Panc1 (cell line): ENCODE measurements at regions of chr17 and their contacts with region 1.

Region 1: GRCh38 chr17:33750943-33751701 is 458.0 kb upstream of the ASIC2 start:
- DNase-seq: peak; percentile 39
- ATAC-seq: peak; percentile 91
- H3K4me3 ChIP-seq: 0 out of 4 replicates have a peak overlapping the region, but pooled peaks of 1 of the 2 experiments have one; percentile 6
- H3K27ac ChIP-seq: no peak overlapping the region
- H3K4me1 ChIP-seq: peaks cover 4% of the 10 kb centered on the region
- H3K27me3 ChIP-seq: peaks cover 8% of the 10 kb centered on the region
- CTCF ChIP-seq: peak; percentile 93

Region 2: GRCh38 chr17:33292184-33292980 is 458.7 kb before region 1 on chr17:
- CTCF ChIA-PET with region 1: interaction called, 10 read pairs
- POLR2A ChIA-PET with region 1: no interaction called
- in situ Hi-C with region 1: no loop called
- intact Hi-C with region 1: no loop called
- DNase-seq: no peak
- ATAC-seq: peak; percentile 78
- H3K4me3 ChIP-seq: peak overlapping the region; percentile 58 to 74
- H3K27ac ChIP-seq: peak overlapping the region; percentile 41; the same call in 1 of the 2 replicates
- H3K4me1 ChIP-seq: peaks cover 31% of the 10 kb centered on the region
- H3K27me3 ChIP-seq: no peaks in the 10 kb centered on the region
- CTCF ChIP-seq: peak; percentile 69

Region 3: DNA sequence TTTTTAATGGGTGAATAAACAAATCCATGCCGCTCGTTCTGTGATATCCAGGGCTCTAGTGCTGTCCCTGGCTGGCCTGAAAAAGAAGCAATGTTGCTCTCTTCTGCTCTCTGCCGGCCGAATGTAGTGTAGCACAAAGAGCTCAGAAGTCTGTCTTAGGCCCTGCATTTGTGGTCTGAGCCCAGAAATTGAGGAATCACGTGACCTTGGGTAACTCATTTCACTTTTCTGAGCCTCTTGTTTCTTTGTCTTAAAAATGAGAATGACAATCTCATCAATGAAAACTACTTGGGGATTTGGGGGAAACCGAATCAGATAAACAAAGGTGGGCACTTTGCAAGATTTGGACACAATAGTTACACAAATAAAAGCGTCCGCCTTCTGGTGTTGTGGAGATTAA is 76.4 kb before region 1 on chr17:
- CTCF ChIA-PET with region 1: no interaction called
- POLR2A ChIA-PET with region 1: no interaction called
- in situ Hi-C with region 1: no loop called
- intact Hi-C with region 1: no loop called
- DNase-seq: peak; percentile 47
- ATAC-seq: peak; percentile 98
- H3K4me3 ChIP-seq: no peak overlapping the region
- H3K27ac ChIP-seq: no peak overlapping the region
- H3K4me1 ChIP-seq: no peaks in the 10 kb centered on the region
- H3K27me3 ChIP-seq: 0 out of 2 replicates have a peak, but pooled peaks cover 2% of the 10 kb centered on the region
- CTCF ChIP-seq: peak; percentile 89

Region 4: DNA sequence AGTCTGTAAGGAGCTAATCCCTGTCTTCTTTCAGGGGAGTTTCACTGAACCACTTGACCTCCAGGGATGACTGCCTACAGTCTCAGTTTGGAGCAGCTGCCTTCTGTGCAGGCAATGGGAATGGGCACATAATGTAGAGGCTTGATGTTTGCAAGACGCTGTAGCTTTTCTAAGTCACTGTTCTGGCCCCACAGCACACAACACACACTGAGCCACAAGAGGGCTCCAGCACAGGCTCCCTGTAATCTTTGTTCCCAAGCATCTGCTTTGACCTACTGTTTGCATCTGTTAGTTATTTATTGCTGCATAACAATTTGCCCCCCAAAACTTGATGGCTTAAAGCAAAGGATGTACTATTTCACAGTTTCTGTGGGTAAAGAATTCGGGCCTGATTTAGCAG is 39.0 kb before region 1 on chr17:
- CTCF ChIA-PET with region 1: interaction called, 3 read pairs
- POLR2A ChIA-PET with region 1: no interaction called
- in situ Hi-C with region 1: no loop called
- intact Hi-C with region 1: loop called (anchors 5 kb)
- DNase-seq: no peak
- ATAC-seq: no peak
- H3K4me3 ChIP-seq: no peak overlapping the region
- H3K27ac ChIP-seq: no peak overlapping the region
- H3K4me1 ChIP-seq: no peaks in the 10 kb centered on the region
- H3K27me3 ChIP-seq: peaks cover 12% of the 10 kb centered on the region
- CTCF ChIP-seq: peak; percentile 49

Region 5: GRCh38 chr17:33769066-33769465 is 17.9 kb after region 1 on chr17:
- CTCF ChIA-PET with region 1: no interaction called
- POLR2A ChIA-PET with region 1: no interaction called
- in situ Hi-C with region 1: no loop called
- intact Hi-C with region 1: no loop called
- DNase-seq: no peak
- ATAC-seq: no peak
- H3K4me3 ChIP-seq: no peak overlapping the region
- H3K27ac ChIP-seq: no peak overlapping the region
- H3K4me1 ChIP-seq: no peaks in the 10 kb centered on the region
- H3K27me3 ChIP-seq: peaks cover 7% of the 10 kb centered on the region; the same call in 1 of the 2 replicates
- CTCF ChIP-seq: no peak